ENCODE measurements at regions of chr2 and their contacts with region 1.

Region 1: GRCh38 chr2:191521608-191522208 is 156.2 kb upstream of the NABP1 start:
- DNase-seq: peak; percentile 33
- CTCF ChIP-seq: peak; percentile 59

Region 2: DNA sequence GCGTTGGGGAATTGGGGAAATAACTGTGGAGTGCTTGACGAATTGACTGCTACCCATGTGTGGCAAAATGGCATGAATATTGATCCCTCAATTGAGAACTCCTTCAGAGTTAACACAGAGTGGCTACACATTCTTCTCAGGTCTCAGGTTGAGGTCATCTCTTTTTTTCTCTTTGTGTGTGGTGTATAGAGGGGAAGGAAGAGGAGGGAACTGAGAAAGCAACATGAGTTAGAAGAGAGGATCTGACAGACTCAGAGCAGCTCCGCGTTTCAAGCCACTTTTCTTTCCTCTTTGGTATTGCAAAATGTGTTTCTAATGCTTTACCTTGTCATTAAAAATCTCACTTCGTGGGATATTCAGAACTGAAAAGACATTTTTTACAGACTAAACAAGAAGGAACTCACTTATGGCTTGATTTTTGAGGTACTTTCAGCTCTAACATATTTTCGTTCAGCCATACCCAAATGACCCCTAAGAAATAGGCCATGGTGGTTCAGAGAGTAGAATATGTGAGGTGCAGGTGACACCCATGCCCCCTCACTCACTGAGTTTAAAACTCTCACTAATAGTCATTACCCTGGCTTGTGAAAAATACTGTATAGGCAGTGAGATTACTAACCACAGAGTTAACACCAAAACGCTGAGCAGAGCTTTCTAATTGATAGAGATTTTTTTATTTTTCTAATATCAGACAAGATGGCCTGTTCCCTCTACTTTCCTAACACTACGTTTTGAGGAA is 393.4 kb before region 1 on chr2:
- in situ Hi-C with region 1: no loop called
- DNase-seq: peak; percentile 45
- CTCF ChIP-seq: no peak

Region 3: DNA sequence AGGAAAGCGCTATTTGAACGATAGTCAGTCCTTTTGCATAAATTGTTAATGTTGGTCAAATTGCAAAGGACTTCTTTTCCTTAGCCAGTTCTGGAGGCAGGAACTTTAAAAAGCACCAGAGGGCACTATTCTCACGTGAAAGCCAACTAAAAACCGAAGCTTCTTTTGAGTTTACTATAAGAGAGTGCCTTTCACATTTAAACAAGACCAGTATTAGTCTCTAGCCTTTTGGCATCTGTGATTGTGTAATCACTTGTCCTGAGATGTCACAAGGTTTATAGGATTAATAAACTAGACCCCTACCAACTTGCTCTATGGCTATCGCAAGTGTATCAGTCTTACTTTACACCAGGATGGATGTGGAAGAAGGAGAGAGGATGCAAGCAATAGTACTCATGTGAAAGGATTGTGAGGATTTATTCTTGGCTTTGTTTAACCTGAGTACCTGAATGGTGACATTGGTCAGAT is 356.5 kb before region 1 on chr2:
- in situ Hi-C with region 1: loop called (anchors 10 kb)
- DNase-seq: peak; percentile 36
- CTCF ChIP-seq: peak; percentile 31

Region 4: DNA sequence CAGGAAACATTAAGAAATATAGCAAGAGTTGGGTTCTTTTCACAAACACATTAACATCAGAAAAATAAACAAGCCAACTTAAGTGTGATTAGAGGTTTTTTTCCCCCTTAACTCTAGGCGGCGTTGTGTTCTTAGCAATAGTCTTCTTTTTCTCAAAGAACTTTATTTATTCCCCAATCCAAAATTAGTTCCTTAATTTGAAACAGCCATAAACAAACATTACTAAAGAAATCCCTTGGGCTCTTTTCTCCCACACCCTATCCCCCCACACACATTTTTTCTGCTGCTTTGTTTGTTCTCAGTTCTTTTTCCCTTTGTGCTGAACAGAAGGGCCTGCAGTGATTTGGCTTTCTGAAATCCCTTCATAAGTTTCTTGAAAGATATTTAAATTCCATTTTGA is 289.7 kb before region 1 on chr2:
- in situ Hi-C with region 1: no loop called
- DNase-seq: no peak
- CTCF ChIP-seq: no peak

Region 5: DNA sequence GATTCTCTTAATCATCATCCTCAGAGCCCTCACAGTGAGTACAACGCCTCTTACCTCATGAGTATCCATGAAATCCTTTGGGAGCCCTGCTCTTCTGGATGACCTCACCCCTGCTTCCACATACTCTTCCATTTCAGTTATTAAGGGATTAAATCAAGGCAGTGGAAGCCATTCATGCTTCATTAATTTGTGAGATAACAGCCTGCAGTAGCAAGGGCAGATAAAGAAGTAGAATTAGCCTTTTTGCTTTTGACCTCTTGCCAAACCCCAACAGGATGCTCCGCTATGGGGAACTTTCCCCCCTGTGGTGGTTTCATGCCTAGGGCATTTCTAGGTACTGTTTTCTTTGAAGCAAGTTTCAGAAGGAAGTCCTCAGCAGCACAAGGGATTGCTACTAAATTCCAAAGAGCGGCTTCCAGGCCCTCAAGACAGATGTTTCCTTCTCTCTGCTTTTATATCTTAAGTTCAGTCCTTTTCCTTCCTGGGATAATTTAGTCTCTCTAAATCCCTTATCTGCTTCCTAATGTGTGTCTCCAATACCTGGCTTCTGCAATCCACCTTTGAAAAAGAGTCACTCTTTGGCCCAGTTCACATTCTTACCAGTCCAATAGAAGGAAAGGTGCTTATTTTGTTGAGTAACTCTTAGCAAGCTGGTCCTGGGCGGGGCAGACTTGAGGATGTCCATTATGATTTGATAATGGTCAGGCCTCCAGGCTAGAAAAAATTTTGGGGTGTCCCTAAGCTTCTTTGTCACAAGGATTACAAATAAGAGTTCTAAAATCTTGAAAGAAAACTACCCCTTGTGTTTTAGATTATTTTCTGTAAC is 199.6 kb before region 1 on chr2:
- in situ Hi-C with region 1: no loop called
- DNase-seq: no peak
- CTCF ChIP-seq: no peak

Region 6: GRCh38 chr2:191478799-191479679 is 42.7 kb before region 1 on chr2:
- in situ Hi-C with region 1: no loop called
- DNase-seq: no peak
- CTCF ChIP-seq: no peak